A549 (cell line): ENCODE measurements at regions of chr18 and their contacts with region 1.

Region 1: GRCh38 chr18:34322365-34323289 is 97.9 kb upstream of the NOL4 start:
- DNase-seq: peak in 1 of 2 experiments; percentile 51
- ATAC-seq: no peak
- H3K4me3 ChIP-seq: no peak overlapping the region
- H3K27ac ChIP-seq: no peak overlapping the region
- H3K4me1 ChIP-seq: no peaks in the 10 kb centered on the region
- CTCF ChIP-seq: peak; percentile 29; the same call in 2 of the 3 replicates
- EP300 ChIP-seq: no peak
- POLR2A ChIP-seq: no peak
- RAD21 ChIP-seq: peak; percentile 18 to 53; a peak in 3 of 5 replicates

Region 2: GRCh38 chr18:34122724-34123334 is 199.8 kb before region 1 on chr18:
- CTCF ChIA-PET with region 1: interaction called, 11 read pairs
- POLR2A ChIA-PET with region 1: no interaction called
- DNase-seq: peak; percentile 2 to 45
- ATAC-seq: peak in 1 of 2 experiments; percentile 57; a peak in 3 of 6 replicates
- H3K4me3 ChIP-seq: no peak overlapping the region
- H3K27ac ChIP-seq: no peak overlapping the region
- H3K4me1 ChIP-seq: no peaks in the 10 kb centered on the region
- CTCF ChIP-seq: peak; percentile 71
- EP300 ChIP-seq: no peak
- POLR2A ChIP-seq: no peak
- RAD21 ChIP-seq: peak; percentile 46 to 61; a peak in 4 of 5 replicates

Region 3: GRCh38 chr18:34219651-34220050 is 103.0 kb before region 1 on chr18:
- CTCF ChIA-PET with region 1: no interaction called
- POLR2A ChIA-PET with region 1: no interaction called
- DNase-seq: no peak
- ATAC-seq: no peak
- H3K4me3 ChIP-seq: no peak overlapping the region
- H3K27ac ChIP-seq: no peak overlapping the region
- H3K4me1 ChIP-seq: no peaks in the 10 kb centered on the region
- CTCF ChIP-seq: no peak
- EP300 ChIP-seq: no peak
- POLR2A ChIP-seq: no peak
- RAD21 ChIP-seq: no peak

Region 4: DNA sequence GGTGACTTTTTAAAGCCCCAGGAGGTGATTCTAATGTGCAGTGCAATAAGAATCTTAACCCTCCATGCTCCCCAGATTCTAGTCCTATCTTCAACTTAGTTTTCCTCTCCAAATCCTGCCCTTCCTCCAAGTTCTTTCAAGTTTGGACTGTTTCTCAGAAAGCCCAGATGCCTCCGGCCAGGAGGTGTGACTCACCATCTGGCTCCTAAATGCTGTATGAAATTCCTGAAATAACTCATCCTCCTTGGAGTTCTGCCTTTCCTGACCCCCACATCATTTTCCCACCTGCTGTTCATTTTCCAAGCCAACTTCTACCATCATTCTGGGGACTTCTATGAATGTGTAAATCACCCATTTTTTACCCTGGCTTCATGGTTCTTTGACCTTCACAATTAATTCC is 20.3 kb after region 1 on chr18:
- CTCF ChIA-PET with region 1: no interaction called
- POLR2A ChIA-PET with region 1: no interaction called
- DNase-seq: no peak
- ATAC-seq: no peak
- H3K4me3 ChIP-seq: no peak overlapping the region
- H3K27ac ChIP-seq: no peak overlapping the region
- H3K4me1 ChIP-seq: no peaks in the 10 kb centered on the region
- CTCF ChIP-seq: no peak
- EP300 ChIP-seq: no peak
- POLR2A ChIP-seq: no peak
- RAD21 ChIP-seq: no peak

Region 5: DNA sequence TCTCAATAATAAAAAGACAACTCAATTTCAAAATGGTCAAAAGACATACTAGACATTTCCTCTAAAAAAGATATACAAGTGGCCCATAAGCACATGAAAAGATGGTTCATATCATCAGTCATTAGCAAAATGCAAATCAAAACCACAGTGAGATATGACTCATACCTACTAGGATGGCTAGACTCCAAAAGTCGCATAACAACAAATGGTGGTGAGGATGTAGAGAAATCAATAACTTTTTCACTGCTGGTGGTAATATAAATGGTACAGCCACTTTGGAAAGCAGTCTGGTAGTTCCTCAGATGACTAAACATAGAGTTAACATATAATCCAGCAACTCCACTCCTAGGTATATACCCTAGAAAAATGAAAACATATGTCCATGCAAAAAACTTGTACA is 144.4 kb after region 1 on chr18:
- CTCF ChIA-PET with region 1: no interaction called
- POLR2A ChIA-PET with region 1: no interaction called
- DNase-seq: no peak
- ATAC-seq: no peak
- H3K4me3 ChIP-seq: no peak overlapping the region
- H3K27ac ChIP-seq: no peak overlapping the region
- H3K4me1 ChIP-seq: no peaks in the 10 kb centered on the region
- CTCF ChIP-seq: no peak
- EP300 ChIP-seq: no peak
- POLR2A ChIP-seq: no peak
- RAD21 ChIP-seq: no peak